ENCODE measurements at regions of chr9 and their contacts with region 1.

Region 1: DNA sequence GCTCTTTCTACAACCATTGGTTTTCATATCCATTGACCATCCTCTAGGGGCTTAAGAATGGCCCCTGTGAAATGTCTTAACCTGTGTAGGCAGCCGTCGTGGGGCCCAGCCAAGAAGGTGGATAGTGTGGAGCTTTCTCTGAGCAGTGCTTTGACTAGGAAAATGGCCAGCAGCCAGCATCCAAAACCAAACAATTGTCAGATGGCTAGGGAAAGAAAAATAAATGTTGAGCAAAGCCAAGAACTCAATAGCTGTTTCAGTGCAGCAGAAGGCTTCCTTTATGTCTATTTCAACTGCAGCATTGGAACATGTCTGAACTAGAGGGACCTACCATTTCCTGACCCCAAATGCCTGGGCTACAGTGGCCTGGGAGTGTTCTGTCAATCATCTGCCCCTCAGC is 374.9 kb downstream of the TLE4 start:
- DNase-seq: no peak
- H3K4me3 ChIP-seq: no peak overlapping the region
- H3K4me1 ChIP-seq: peaks cover 5% of the 10 kb centered on the region; the same call in 1 of the 2 replicates
- H3K27me3 ChIP-seq: no peaks in the 10 kb centered on the region

Region 2: GRCh38 chr9:79551994-79552393 is 394.7 kb before region 1 on chr9:
- in situ Hi-C with region 1: no loop called
- DNase-seq: no peak
- H3K4me3 ChIP-seq: no peak overlapping the region
- H3K4me1 ChIP-seq: no peaks in the 10 kb centered on the region
- H3K27me3 ChIP-seq: no peaks in the 10 kb centered on the region

Region 3: GRCh38 chr9:80028501-80028900 is 81.8 kb after region 1 on chr9:
- in situ Hi-C with region 1: loop called (anchors 25 kb)
- DNase-seq: no peak
- H3K4me3 ChIP-seq: no peak overlapping the region
- H3K4me1 ChIP-seq: no peaks in the 10 kb centered on the region
- H3K27me3 ChIP-seq: no peaks in the 10 kb centered on the region

Measured in HAP-1 (cell line).